ENCODE measurements at regions of chr16 and their contacts with region 1.

Region 1: GRCh38 chr16:84765616-84766580 is 53.9 kb upstream of the CRISPLD2 start:
- DNase-seq: no peak
- H3K4me3 Mint-ChIP-seq: no peak overlapping the region
- H3K27ac Mint-ChIP-seq: peak overlapping the region; percentile 81
- H3K4me1 Mint-ChIP-seq: peaks cover 47% of the 10 kb centered on the region
- H3K27me3 Mint-ChIP-seq: no peaks in the 10 kb centered on the region

Region 2: GRCh38 chr16:84754353-84754856 is 11.5 kb before region 1 on chr16:
- CTCF ChIA-PET with region 1: interaction called, 54 read pairs
- POLR2A ChIA-PET with region 1: interaction called, 12 read pairs
- DNase-seq: peak; percentile 75
- H3K4me3 Mint-ChIP-seq: peak overlapping the region; percentile 58
- H3K27ac Mint-ChIP-seq: peak overlapping the region; percentile 53
- H3K4me1 Mint-ChIP-seq: peaks cover 83% of the 10 kb centered on the region
- H3K27me3 Mint-ChIP-seq: no peaks in the 10 kb centered on the region

Measured in activated CD4-positive, alpha-beta memory T cell treated with anti-CD3 and anti-CD28 coated beads, Interleukin-2, amount 10 ng/mL, durations not matched to agents 7 days and 5 days (primary cell).